ENCODE measurements at regions of chr5 and their contacts with region 1.

Region 1: DNA sequence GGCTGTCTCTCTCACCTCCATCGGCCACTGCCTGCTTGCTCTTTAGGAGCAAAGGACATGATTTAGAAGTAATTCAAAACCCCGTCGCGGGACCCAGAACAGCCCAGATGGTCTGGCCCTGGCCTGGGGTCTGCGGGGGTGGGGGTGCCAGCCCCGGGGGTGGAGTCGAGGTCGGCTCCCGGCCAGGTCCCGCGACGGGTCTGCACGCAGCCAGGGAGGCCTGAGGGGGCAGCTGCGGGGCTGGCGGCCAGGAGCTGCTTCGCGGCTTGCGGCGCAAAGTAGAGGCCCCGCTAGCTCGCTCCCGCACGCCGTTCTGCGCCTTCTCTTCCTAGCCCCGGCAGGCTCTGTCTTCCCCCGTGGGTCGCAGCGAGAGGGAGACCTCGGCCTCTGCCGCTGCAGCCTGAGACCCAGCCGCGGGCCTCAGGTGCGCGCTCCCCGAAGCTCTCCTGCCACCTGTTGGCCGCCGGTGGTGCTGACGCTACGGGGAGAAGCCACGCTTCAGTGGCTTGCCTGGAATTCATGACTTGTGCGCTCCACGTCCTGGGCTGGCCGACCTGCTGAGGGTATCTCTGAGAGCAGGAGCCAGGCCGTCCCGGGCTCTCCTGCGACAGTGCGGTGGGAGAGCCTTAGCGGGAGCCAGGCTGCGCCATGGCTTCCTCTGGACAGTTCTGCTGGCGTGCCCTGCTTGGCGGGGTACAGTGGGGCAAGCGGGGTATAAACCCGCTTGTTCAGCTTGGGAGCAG is 157.2 kb upstream of the PITX1 start:
- DNase-seq: no peak
- H3K4me3 ChIP-seq: peak overlapping the region; percentile 44
- H3K27me3 ChIP-seq: no peaks in the 10 kb centered on the region
- CTCF ChIP-seq: peak; percentile 97

Region 2: DNA sequence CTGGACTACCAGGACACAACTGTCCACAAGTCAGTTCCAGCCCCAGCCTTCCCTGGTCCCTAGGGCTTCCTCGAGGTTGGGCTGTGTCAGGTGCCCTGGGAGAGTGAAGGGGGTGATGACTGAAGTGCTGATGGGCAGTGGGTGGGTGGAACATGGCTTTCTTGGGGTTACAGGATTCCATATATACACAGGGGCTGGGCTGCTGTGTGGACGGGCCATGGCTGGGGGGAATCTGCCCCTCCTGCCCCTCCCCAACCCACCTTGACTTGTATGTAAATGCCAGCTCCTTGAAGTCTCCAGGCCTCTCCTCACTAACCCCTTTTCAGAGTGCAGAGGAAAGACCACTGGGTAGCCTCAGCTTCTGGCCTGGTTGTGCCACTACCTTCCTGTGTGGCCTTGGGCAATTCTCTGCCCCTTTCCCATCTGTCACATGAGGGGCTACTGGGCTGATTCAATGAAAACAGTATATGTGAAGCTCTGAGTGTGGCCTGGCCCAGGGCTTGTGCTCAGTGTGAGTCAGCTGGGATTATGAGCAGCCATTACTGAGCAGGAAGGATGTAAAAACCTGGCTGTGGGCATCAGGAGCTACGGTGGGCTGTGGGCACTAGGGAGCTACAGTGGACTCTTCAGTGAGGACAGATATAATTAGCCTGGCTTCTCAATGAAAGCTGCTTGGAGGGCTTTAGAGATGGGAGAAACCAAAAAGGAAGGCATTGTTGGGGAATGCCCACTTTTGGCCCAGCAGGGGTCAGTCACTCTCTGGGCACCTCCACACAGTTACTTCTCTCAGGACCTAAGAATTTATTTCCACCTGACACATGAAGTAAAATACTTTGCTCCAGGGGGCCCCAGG is 180.5 kb before region 1 on chr5:
- CTCF ChIA-PET with region 1: interaction called, 13 read pairs
- POLR2A ChIA-PET with region 1: no interaction called
- DNase-seq: no peak
- H3K4me3 ChIP-seq: no peak overlapping the region
- H3K27me3 ChIP-seq: no peaks in the 10 kb centered on the region
- CTCF ChIP-seq: peak; percentile 36

Region 3: DNA sequence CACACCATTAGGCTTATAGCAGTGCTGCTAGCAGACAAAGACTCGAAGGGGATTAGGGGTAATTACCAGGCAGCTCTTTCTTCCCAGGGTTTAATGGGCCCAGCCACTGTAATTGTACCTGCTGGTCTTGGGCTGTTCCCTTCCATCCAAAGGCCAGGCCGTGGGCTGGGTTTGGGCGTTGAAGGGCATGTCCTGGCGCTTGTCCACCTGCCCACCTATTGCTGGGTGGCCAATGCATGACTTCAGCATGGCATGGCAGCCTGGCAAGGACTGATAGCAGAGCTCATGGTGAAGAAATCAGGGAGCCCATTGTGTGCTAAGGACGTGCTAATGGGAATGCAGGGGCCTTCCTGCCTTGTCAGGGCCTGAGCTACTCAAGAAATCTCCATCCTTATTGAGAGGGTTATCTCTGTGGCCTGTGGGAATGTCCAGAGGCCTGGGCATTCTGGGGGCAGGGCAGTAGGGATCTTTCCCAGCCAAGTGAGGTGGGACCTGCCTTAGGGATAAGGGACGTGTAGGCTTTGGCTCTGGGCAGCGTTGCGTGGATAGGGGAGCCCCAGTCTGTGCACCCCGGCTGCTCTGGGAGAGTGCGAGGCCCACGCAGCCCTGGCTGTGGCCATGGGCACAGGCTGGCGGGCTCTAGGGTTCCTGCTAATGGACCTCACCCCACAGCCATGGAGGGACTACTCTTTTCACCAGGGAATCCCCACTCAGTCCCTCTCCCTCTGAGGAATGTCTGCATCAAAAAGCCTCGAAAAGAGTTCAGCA is 41.1 kb before region 1 on chr5:
- CTCF ChIA-PET with region 1: no interaction called
- POLR2A ChIA-PET with region 1: no interaction called
- DNase-seq: no peak
- H3K4me3 ChIP-seq: no peak overlapping the region
- H3K27me3 ChIP-seq: no peaks in the 10 kb centered on the region; the same call in 1 of the 2 replicates
- CTCF ChIP-seq: no peak

Region 4: DNA sequence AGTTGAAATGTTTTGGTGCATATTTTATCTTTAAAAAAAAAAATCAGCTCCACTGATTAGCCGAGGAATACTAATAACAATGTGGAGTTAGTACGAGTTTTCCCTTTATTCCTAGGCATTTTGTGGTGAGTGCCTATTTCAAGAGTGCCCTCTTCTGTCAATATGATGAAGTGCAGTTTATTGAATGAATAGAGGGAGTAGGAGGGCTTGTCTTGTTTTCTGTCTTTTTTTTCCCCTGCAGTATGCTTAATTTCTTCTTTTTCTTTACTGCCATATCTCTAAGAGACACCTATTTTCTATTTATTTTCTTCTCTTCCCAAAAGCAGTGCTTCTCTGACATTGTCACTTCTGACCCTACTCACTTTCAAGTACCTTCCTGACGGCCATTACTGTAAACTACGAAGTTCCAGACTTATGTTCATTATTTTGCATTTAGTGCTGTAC is 12.4 kb after region 1 on chr5:
- CTCF ChIA-PET with region 1: interaction called, 20 read pairs
- POLR2A ChIA-PET with region 1: no interaction called
- DNase-seq: no peak
- H3K4me3 ChIP-seq: no peak overlapping the region
- H3K27me3 ChIP-seq: no peaks in the 10 kb centered on the region
- CTCF ChIP-seq: peak; percentile 28

Region 5: DNA sequence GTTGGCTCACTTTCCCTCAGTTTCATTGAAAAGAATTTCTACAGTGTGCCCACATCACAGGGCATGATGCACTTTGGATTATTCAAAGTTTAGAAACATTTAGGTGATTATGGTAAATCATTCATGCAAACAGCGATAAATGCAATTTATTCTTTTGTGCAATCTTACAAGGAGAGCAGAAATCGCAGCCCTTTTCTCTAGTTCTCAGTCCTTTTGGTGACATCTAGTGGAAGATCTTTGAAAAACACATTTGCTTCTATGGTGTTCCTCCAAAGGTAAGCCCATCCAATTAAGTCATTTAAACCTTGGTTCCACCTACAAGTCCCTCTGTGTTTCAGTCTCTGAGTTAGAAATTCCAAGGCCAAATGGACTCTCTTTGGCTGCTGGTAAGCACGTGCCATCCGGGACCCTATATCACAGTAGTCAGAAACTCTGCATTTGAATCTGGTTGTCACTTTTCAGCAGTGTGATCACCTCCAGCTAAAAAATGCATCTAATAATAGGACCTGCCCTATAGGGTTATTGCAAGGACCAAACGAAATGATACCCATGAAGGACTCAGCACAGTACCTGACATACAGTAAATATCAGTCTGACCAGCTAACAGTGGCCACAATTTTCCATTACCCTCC is 141.4 kb after region 1 on chr5:
- CTCF ChIA-PET with region 1: interaction called, 17 read pairs
- POLR2A ChIA-PET with region 1: no interaction called
- DNase-seq: no peak
- H3K4me3 ChIP-seq: no peak overlapping the region
- H3K27me3 ChIP-seq: no peaks in the 10 kb centered on the region
- CTCF ChIP-seq: peak; percentile 63